ENCODE measurements at regions of chr1 and their contacts with region 1.

Region 1: DNA sequence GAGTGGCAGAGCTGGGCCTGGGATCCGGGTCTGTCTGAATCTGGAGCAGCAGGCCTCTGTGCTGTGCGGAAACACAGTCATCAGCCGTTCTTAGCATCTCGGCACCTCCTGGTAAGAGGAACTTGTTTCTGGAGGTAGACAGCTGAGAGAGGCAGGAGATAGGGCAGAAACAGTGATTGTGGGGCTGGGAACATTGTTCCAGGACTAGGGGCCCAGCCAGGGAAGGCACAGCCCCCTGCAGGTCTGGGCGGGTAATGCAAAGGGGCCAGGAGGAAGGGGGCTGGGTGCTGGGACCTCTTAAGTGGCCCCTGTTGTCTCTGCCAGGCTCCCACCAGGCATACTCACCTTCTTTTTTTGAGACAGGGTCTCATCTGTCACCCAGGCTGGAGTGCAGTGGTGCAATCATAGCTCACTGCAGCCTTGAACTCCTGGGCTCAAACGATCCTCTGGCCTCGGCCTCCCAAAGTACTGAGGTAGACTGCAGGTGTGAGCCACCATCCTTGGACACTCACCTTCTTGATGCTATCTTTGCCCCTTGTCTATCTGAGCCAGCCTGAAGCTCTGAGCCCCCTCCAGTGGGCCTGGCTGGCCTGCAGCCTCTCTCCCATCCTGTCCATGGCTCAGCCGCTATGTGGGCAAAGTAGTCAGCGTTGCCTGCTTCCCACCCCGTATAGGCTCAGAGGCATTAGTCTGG is 134.3 kb upstream of the ZBTB40 start:
- DNase-seq: peak in 1 of 2 experiments; percentile 86
- H3K4me3 ChIP-seq: no peak overlapping the region
- H3K27ac ChIP-seq: no peak overlapping the region
- H3K4me1 ChIP-seq: peaks cover 7 to 35% (median 23%) of the 10 kb centered on the region in 4 experiments
- H3K27me3 ChIP-seq: peaks cover 0 to 4% (median 0%) of the 10 kb centered on the region in 4 experiments; a peak in 2 of 7 replicates
- CTCF ChIP-seq: peak; percentile 72 to 91 (median 88)
- EP300 ChIP-seq: no peak
- POLR2A ChIP-seq: no peak
- RAD21 ChIP-seq: peak; percentile 70 to 79

Region 2: DNA sequence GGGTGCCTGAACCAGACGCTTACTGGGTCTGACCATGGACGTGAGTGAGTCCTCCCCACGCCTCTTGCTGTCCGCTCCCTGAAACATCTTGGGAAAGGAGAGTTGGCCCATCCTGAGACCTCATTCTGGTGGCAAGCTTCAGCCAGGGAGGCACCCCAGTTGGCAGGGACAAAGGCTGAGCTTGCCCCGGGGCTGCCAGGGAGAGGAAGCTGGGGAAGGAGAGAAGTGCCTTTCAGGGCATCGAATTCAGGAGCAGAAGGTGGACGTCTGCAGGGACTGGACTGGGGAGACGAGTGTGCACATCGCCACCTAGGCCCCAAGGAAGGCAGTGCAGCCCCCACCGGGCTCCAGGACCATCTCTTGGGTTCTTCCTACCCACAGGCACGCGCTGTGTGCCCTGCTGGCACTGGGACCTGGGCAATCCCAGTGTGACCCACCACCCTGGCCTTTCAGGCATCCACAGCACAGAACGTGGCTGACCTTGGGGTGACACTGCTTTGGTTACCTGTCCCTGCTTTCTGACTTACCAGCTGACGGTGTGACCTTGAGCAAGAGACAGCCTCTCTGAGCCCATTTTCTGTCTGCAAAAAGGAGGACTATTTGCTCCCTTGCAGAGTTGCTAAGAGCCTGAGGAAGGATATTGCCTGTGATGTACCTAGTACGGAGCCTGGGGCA is 41.5 kb before region 1 on chr1:
- CTCF ChIA-PET with region 1: interaction called, 11 read pairs
- POLR2A ChIA-PET with region 1: no interaction called
- DNase-seq: peak; percentile 44 to 93
- H3K4me3 ChIP-seq: no peak overlapping the region
- H3K27ac ChIP-seq: no peak overlapping the region
- H3K4me1 ChIP-seq: peaks cover 2 to 15% (median 9%) of the 10 kb centered on the region in 4 experiments
- H3K27me3 ChIP-seq: peaks cover 0 to 3% (median 0%) of the 10 kb centered on the region in 4 experiments; a peak in 3 of 7 replicates
- CTCF ChIP-seq: peak; percentile 81 to 98 (median 95)
- EP300 ChIP-seq: no peak
- POLR2A ChIP-seq: no peak
- RAD21 ChIP-seq: peak; percentile 84 to 87

Region 3: GRCh38 chr1:22296701-22297591 is 20.4 kb before region 1 on chr1:
- CTCF ChIA-PET with region 1: interaction called, 15 read pairs
- POLR2A ChIA-PET with region 1: no interaction called
- DNase-seq: peak in 1 of 2 experiments; percentile 35
- H3K4me3 ChIP-seq: no peak overlapping the region
- H3K27ac ChIP-seq: no peak overlapping the region
- H3K4me1 ChIP-seq: no peaks in the 10 kb centered on the region; a peak in 1 of 7 replicates
- H3K27me3 ChIP-seq: no peaks in the 10 kb centered on the region
- CTCF ChIP-seq: no peak
- EP300 ChIP-seq: no peak
- POLR2A ChIP-seq: no peak
- RAD21 ChIP-seq: no peak

Region 4: GRCh38 chr1:22339237-22339636 is 21.9 kb after region 1 on chr1:
- CTCF ChIA-PET with region 1: interaction called, 14 read pairs
- POLR2A ChIA-PET with region 1: interaction called, 3 read pairs
- DNase-seq: no peak
- H3K4me3 ChIP-seq: no peak overlapping the region
- H3K27ac ChIP-seq: no peak overlapping the region
- H3K4me1 ChIP-seq: peaks cover 0 to 4% (median 2%) of the 10 kb centered on the region in 4 experiments; a peak in 3 of 7 replicates
- H3K27me3 ChIP-seq: no peaks in the 10 kb centered on the region; a peak in 3 of 7 replicates
- CTCF ChIP-seq: no peak
- EP300 ChIP-seq: no peak
- POLR2A ChIP-seq: no peak
- RAD21 ChIP-seq: no peak

Region 5: DNA sequence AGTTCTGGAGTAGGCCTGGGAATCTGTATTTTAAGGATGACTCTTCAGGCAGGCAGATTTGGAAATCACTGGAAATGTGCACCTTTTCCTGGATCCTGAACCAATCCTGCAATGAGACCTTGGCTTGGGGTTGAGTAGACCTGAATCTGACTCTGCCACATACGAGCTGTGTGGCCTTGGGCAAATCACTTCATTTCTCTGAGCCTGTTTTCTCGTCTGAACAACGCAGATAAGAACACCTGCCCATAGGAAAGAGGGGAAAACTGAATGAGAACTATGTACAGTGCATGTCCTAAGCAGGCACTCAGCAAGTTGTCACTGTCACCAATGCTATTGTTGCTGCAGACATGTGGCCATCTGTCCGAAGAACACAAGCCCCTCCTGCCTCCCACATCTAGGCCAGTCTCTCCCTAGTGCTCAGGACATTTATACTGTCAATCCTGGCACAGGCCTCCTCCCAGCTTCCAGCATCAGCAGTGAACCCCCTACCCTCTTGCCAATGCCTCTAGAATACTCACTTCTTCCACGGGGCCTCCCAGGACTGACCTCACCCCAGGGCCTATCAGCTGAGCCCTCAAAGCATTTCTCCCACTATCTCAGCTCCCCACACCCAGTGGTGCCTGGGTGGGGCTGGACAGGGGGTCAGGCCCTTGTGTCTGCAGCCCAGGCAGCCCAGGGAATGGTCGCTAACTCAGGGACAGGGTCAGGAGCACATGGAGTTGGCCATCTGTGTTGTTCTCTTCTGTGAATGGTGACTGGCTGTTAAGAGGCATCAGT is 45.4 kb after region 1 on chr1:
- CTCF ChIA-PET with region 1: interaction called, 11 read pairs
- POLR2A ChIA-PET with region 1: no interaction called
- DNase-seq: no peak
- H3K4me3 ChIP-seq: no peak overlapping the region
- H3K27ac ChIP-seq: no peak overlapping the region
- H3K4me1 ChIP-seq: peaks cover 0 to 9% (median 1%) of the 10 kb centered on the region in 4 experiments; a peak in 4 of 7 replicates
- H3K27me3 ChIP-seq: peaks cover 0 to 2% (median 0%) of the 10 kb centered on the region in 4 experiments; a peak in 1 of 7 replicates
- CTCF ChIP-seq: no peak
- EP300 ChIP-seq: no peak
- POLR2A ChIP-seq: no peak
- RAD21 ChIP-seq: no peak

Region 6: GRCh38 chr1:22447611-22448111 is 130.3 kb after region 1 on chr1:
- CTCF ChIA-PET with region 1: no interaction called
- POLR2A ChIA-PET with region 1: no interaction called
- DNase-seq: no peak
- H3K4me3 ChIP-seq: no peak overlapping the region
- H3K27ac ChIP-seq: no peak overlapping the region
- H3K4me1 ChIP-seq: peaks cover 0 to 13% (median 6%) of the 10 kb centered on the region in 4 experiments
- H3K27me3 ChIP-seq: no peaks in the 10 kb centered on the region
- CTCF ChIP-seq: no peak
- EP300 ChIP-seq: no peak
- POLR2A ChIP-seq: no peak
- RAD21 ChIP-seq: no peak

Region 7: GRCh38 chr1:22537441-22538139 is 220.2 kb after region 1 on chr1:
- CTCF ChIA-PET with region 1: no interaction called
- POLR2A ChIA-PET with region 1: no interaction called
- DNase-seq: no peak
- H3K4me3 ChIP-seq: no peak overlapping the region
- H3K27ac ChIP-seq: no peak overlapping the region
- H3K4me1 ChIP-seq: no peaks in the 10 kb centered on the region; a peak in 1 of 7 replicates
- H3K27me3 ChIP-seq: no peaks in the 10 kb centered on the region
- CTCF ChIP-seq: no peak
- EP300 ChIP-seq: no peak
- POLR2A ChIP-seq: no peak
- RAD21 ChIP-seq: no peak